ENCODE measurements at regions of chr12 and their contacts with region 1.

Region 1: GRCh38 chr12:80412369-80412953 is 31.6 kb upstream of the PTPRQ start:
- DNase-seq: no peak
- H3K4me3 ChIP-seq: no peak overlapping the region
- CTCF ChIP-seq: no peak
- POLR2A ChIP-seq: no peak

Region 2: GRCh38 chr12:80321649-80322048 is 90.8 kb before region 1 on chr12:
- intact Hi-C with region 1: no loop called
- DNase-seq: no peak
- H3K4me3 ChIP-seq: no peak overlapping the region
- CTCF ChIP-seq: no peak
- POLR2A ChIP-seq: no peak

Region 3: DNA sequence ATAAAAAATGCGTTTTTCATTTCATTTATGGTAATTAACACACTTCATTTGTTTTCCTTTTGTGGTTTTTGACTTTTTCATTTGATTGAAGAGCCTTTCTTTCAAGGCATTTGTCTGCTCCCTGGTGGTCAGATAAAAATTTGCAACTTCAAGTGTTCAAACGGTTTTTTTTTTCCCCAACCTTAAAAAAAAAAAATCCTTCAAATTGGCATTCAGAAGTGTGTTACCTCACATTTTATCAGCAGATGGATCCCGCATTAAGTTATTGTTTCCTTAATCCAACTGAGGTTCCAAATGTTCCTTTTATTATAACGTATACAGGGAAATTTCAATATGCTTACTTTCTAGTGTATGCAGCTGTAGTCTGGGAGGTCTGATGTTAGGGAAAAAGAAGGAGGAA is 351.4 kb after region 1 on chr12:
- intact Hi-C with region 1: loop called (anchors 10 kb)
- DNase-seq: no peak
- H3K4me3 ChIP-seq: no peak overlapping the region
- CTCF ChIP-seq: no peak
- POLR2A ChIP-seq: no peak